IMR-90 (cell line): ENCODE measurements at regions of chr6 and their contacts with region 1.

Region 1: GRCh38 chr6:123316733-123317323 is 319.9 kb downstream of the TRDN start:
- DNase-seq: peak; percentile 4
- ATAC-seq: no peak
- H3K4me3 ChIP-seq: no peak overlapping the region
- H3K27ac ChIP-seq: no peak overlapping the region
- H3K4me1 ChIP-seq: no peaks in the 10 kb centered on the region
- H3K27me3 ChIP-seq: no peaks in the 10 kb centered on the region
- CTCF ChIP-seq: peak; percentile 46
- POLR2A ChIP-seq: no peak
- RAD21 ChIP-seq: peak; percentile 9; the same call in 1 of the 2 replicates

Region 2: DNA sequence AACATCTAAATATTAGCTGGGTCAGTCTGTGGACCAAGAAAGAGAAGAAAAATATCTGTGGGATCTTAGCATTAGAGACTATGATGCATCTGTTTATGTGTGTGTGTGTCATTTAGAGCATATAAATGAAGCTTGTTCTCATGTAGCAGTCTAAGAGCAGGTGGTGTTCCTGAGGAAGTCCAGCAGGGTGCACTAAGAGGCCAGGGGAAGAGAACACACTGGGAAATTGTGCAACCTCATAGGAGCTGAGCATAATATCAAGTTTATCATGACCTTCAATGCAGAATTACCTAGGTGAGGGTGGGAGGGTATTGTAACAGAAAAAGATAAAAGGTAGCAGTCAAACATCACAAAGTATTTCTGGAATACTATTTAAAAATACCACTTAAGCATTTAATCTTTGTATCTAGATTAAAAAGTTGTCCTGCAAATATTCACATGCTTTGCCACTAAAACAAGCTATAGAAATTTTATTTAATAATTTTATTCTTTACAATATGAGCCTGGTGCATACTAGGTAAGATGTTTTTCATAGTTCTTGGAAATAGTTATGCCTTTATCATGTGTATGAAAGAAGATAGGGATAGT is 447.3 kb before region 1 on chr6:
- CTCF ChIA-PET with region 1: no interaction called
- POLR2A ChIA-PET with region 1: no interaction called
- dilution Hi-C with region 1: no loop called
- in situ Hi-C with region 1: loop called (anchors 25 kb)
- intact Hi-C with region 1: loop called (anchors 1 kb)
- DNase-seq: peak; percentile 47
- ATAC-seq: peak; percentile 84
- H3K4me3 ChIP-seq: no peak overlapping the region
- H3K27ac ChIP-seq: no peak overlapping the region
- H3K4me1 ChIP-seq: no peaks in the 10 kb centered on the region
- H3K27me3 ChIP-seq: no peaks in the 10 kb centered on the region
- CTCF ChIP-seq: peak; percentile 55
- POLR2A ChIP-seq: no peak
- RAD21 ChIP-seq: peak; percentile 55

Region 3: GRCh38 chr6:123333000-123333756 is 16.4 kb after region 1 on chr6:
- CTCF ChIA-PET with region 1: no interaction called
- POLR2A ChIA-PET with region 1: no interaction called
- dilution Hi-C with region 1: no loop called
- in situ Hi-C with region 1: no loop called
- intact Hi-C with region 1: no loop called
- DNase-seq: no peak
- ATAC-seq: no peak
- H3K4me3 ChIP-seq: no peak overlapping the region
- H3K27ac ChIP-seq: no peak overlapping the region
- H3K4me1 ChIP-seq: no peaks in the 10 kb centered on the region
- H3K27me3 ChIP-seq: no peaks in the 10 kb centered on the region
- CTCF ChIP-seq: no peak
- POLR2A ChIP-seq: no peak
- RAD21 ChIP-seq: no peak